ENCODE measurements at regions of chr1 and their contacts with region 1.

Region 1: GRCh38 chr1:224922404-224923164 is 6.9 kb upstream of the DNAH14 start:
- ATAC-seq: peak; percentile 72 to 95 (median 90)
- H3K4me3 ChIP-seq: no peak overlapping the region
- H3K27ac ChIP-seq: no peak overlapping the region
- H3K4me1 ChIP-seq: no peaks in the 10 kb centered on the region

Region 2: GRCh38 chr1:224519874-224520273 is 402.7 kb before region 1 on chr1:
- in situ Hi-C with region 1: loop called in 4 of 9 experiments (anchors 5 to 25 kb)
- ATAC-seq: no peak
- H3K4me3 ChIP-seq: no peak overlapping the region
- H3K27ac ChIP-seq: no peak overlapping the region
- H3K4me1 ChIP-seq: no peaks in the 10 kb centered on the region

Region 3: DNA sequence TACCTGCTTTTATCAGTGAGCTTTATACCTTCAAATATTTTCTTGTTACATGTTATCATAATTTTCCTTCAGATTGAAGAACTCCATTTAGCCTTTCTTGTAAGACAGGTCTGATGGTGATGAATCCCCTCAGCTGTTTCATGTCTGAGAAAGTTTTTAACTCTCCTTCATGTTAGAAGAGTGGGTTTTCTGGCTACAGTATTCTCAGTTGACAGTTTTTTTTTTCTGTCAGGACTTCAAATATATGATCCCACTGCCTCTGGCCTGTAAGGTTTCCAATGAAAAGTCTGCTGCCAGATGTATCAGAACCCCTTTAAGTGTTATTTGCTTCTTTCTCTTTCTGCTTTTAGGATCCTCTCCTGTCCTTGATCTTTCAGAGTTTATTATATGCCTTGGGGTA is 257.1 kb after region 1 on chr1:
- in situ Hi-C with region 1: no loop called
- ATAC-seq: no peak
- H3K4me3 ChIP-seq: no peak overlapping the region
- H3K27ac ChIP-seq: no peak overlapping the region
- H3K4me1 ChIP-seq: no peaks in the 10 kb centered on the region